GM13977 (cell line): ENCODE measurements at regions of chr4 and their contacts with region 1.

Region 1: DNA sequence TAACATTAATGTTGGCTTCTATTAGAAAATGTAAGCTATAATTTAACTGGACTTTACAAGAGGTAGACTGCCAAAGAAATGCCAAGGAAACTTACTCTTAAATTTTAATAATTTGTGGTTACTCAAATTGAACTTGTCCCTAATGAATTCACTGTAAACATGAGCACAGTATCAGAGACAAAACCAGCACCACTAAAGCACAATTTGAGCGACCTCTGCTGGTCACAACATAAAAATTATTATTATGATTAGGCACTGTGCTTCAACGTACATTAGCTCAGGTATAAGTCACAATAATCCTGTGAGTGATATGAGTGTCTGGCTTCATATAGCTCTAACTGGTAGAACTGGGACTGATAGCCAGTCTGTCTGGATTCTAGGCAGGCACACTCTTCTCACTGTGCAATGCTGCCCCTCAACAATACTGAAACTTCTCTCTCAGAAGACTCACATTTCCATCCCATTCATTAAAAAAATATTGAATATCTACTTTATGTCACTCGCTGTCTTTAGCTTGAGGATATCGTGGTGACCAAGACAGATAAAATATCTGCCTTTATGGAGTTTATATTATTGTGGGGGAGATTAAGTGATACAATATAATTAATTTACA is 8.0 kb downstream of the NUDT6 start:
- DNase-seq: peak; percentile 31
- CTCF ChIP-seq: peak; percentile 56

Region 2: GRCh38 chr4:122758033-122758432 is 156.4 kb before region 1 on chr4:
- in situ Hi-C with region 1: loop called (anchors 10 kb)
- DNase-seq: peak; percentile 22
- CTCF ChIP-seq: peak; percentile 50

Region 3: GRCh38 chr4:123966990-123967769 is 1052.8 kb after region 1 on chr4:
- in situ Hi-C with region 1: no loop called
- DNase-seq: no peak
- CTCF ChIP-seq: no peak